ENCODE measurements at regions of chr20 and their contacts with region 1.

Region 1: DNA sequence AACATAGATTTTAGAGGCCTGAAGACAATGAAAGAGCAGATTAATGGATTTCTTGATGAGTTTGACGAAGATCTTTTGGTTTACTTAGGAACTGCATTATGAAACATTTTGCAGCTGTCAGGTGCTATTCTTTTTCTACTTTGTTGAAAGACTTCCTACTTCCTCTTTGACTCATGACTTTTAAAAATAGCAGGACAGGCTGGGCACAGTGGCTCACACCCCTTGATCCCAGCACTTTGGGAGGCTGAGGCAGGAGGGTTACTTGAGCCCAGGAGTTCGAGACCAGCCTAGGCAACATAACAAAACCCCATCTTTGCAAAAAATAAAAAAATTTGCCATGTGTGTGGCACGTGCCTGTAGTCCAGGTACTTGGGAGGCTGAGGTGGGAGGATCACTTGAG is 52.0 kb downstream of the ITCH start:
- DNase-seq: no peak
- ATAC-seq: peak; percentile 49
- H3K4me3 Mint-ChIP-seq: peak overlapping the region; percentile 36
- H3K27ac Mint-ChIP-seq: peak overlapping the region; percentile 79
- H3K4me1 Mint-ChIP-seq: peaks cover 21% of the 10 kb centered on the region
- H3K27me3 Mint-ChIP-seq: no peaks in the 10 kb centered on the region
- CTCF ChIP-seq: no peak

Region 2: GRCh38 chr20:34403908-34404307 is 11.2 kb before region 1 on chr20:
- CTCF ChIA-PET with region 1: no interaction called
- POLR2A ChIA-PET with region 1: no interaction called
- intact Hi-C with region 1: loop called (anchors 2 kb)
- DNase-seq: no peak
- ATAC-seq: peak; percentile 60
- H3K4me3 Mint-ChIP-seq: peak overlapping the region; percentile 24
- H3K27ac Mint-ChIP-seq: peak overlapping the region; percentile 68
- H3K4me1 Mint-ChIP-seq: peaks cover 53% of the 10 kb centered on the region
- H3K27me3 Mint-ChIP-seq: no peaks in the 10 kb centered on the region
- CTCF ChIP-seq: no peak

Measured in activated B cell treated with CpG ODN at 0.5 μM for 24 hours (primary cell).